ENCODE measurements at regions of chr6 and their contacts with region 1.

Region 1: DNA sequence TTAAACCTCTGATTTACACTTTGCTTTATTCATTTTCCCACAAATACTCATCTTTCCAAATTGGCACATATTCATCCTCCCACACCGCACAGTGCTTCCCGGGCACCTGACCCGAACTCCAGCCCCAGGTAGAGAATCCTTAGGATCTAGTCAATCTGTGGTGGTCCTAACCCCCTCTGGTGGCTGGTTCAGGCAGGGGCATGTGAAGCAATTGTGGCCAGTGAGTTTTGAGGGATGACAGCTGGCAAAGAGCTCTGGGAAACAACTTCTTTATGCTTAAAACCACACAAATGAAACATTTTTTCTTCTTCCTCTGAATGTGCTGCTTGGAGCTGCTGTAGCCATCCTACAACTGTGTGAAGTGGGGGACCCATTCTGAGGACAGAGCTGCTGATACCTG is 54.7 kb downstream of the ELOVL5 start:
- DNase-seq: no peak
- ATAC-seq: no peak
- H3K4me3 ChIP-seq: no peak overlapping the region
- H3K27ac ChIP-seq: no peak overlapping the region
- H3K4me1 ChIP-seq: no peaks in the 10 kb centered on the region
- H3K27me3 ChIP-seq: no peaks in the 10 kb centered on the region
- CTCF ChIP-seq: peak in 3 of 5 experiments; percentile 17 to 40 (median 37)
- POLR2A ChIP-seq: no peak

Region 2: GRCh38 chr6:52846002-52846401 is 448.1 kb before region 1 on chr6:
- in situ Hi-C with region 1: no loop called
- intact Hi-C with region 1: no loop called
- DNase-seq: no peak
- ATAC-seq: no peak
- H3K4me3 ChIP-seq: no peak overlapping the region
- H3K27ac ChIP-seq: no peak overlapping the region
- H3K4me1 ChIP-seq: no peaks in the 10 kb centered on the region
- H3K27me3 ChIP-seq: no peaks in the 10 kb centered on the region
- CTCF ChIP-seq: no peak
- POLR2A ChIP-seq: no peak

Region 3: GRCh38 chr6:53171605-53172446 is 122.3 kb before region 1 on chr6:
- in situ Hi-C with region 1: no loop called
- intact Hi-C with region 1: loop called (anchors 10 kb)
- DNase-seq: peak; percentile 66 to 77
- ATAC-seq: peak; percentile 73 to 75
- H3K4me3 ChIP-seq: no peak overlapping the region
- H3K27ac ChIP-seq: no peak overlapping the region
- H3K4me1 ChIP-seq: no peaks in the 10 kb centered on the region
- H3K27me3 ChIP-seq: no peaks in the 10 kb centered on the region
- CTCF ChIP-seq: peak; percentile 97 to 100 (median 100)
- POLR2A ChIP-seq: no peak